AG04450 (cell line): ENCODE measurements at regions of chr14 and their contacts with region 1.

Region 1: GRCh38 chr14:35215110-35215876 is 76.9 kb upstream of the PSMA6 start:
- DNase-seq: peak; percentile 34
- H3K4me3 ChIP-seq: no peak overlapping the region
- H3K27ac ChIP-seq: no peak overlapping the region
- H3K27me3 ChIP-seq: no peaks in the 10 kb centered on the region
- CTCF ChIP-seq: peak; percentile 72

Region 2: GRCh38 chr14:34817768-34818167 is 397.5 kb before region 1 on chr14:
- CTCF ChIA-PET with region 1: no interaction called
- POLR2A ChIA-PET with region 1: no interaction called
- DNase-seq: no peak
- H3K4me3 ChIP-seq: no peak overlapping the region
- H3K27ac ChIP-seq: no peak overlapping the region
- H3K27me3 ChIP-seq: no peaks in the 10 kb centered on the region
- CTCF ChIP-seq: no peak

Region 3: GRCh38 chr14:35140718-35141581 is 74.3 kb before region 1 on chr14:
- CTCF ChIA-PET with region 1: interaction called, 37 read pairs
- POLR2A ChIA-PET with region 1: no interaction called
- DNase-seq: no peak
- H3K4me3 ChIP-seq: no peak overlapping the region
- H3K27ac ChIP-seq: no peak overlapping the region
- H3K27me3 ChIP-seq: no peaks in the 10 kb centered on the region
- CTCF ChIP-seq: peak; percentile 29

Region 4: DNA sequence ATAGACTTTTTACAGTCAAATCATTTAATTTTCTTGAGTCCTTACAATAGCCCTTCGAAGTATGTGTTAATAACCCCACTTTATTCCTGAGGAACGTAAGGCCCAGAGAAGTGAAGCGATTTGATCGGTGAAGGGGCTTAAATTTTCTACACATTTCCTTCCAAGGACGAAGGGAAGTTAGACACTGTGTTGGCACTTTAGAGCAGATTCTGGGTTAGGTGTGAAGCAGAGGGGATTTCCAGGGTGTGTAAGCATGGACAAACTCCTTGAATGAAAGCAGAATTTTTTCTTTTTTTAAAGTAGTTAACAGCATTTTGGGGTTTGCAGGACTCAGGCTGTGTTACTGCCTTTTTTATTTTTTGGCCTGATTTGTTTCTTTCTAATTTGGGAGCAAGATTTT is 54.1 kb before region 1 on chr14:
- CTCF ChIA-PET with region 1: interaction called, 10 read pairs
- POLR2A ChIA-PET with region 1: no interaction called
- DNase-seq: no peak
- H3K4me3 ChIP-seq: no peak overlapping the region
- H3K27ac ChIP-seq: no peak overlapping the region
- H3K27me3 ChIP-seq: no peaks in the 10 kb centered on the region
- CTCF ChIP-seq: no peak

Region 5: DNA sequence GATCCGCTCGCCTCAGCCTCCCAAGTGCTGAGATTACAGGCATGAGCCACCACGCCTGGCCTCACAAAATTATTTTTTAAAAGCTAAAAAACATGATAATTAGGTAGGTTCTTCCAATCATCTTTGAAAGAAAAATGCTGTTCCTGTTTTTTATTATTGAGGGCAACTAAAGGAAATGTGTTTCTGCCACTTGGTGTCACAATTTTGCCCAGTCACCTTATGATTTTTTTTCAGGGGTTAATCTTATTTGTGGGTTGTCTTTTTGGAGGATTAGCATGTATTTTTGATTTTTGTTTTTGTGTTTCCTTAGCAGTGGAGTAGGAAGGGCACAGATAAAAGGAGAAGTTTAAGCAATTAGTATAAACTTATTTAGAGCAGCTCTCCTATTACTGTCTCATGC is 13.1 kb before region 1 on chr14:
- CTCF ChIA-PET with region 1: interaction called, 12 read pairs
- POLR2A ChIA-PET with region 1: no interaction called
- DNase-seq: no peak
- H3K4me3 ChIP-seq: no peak overlapping the region
- H3K27ac ChIP-seq: no peak overlapping the region
- H3K27me3 ChIP-seq: no peaks in the 10 kb centered on the region
- CTCF ChIP-seq: no peak

Region 6: DNA sequence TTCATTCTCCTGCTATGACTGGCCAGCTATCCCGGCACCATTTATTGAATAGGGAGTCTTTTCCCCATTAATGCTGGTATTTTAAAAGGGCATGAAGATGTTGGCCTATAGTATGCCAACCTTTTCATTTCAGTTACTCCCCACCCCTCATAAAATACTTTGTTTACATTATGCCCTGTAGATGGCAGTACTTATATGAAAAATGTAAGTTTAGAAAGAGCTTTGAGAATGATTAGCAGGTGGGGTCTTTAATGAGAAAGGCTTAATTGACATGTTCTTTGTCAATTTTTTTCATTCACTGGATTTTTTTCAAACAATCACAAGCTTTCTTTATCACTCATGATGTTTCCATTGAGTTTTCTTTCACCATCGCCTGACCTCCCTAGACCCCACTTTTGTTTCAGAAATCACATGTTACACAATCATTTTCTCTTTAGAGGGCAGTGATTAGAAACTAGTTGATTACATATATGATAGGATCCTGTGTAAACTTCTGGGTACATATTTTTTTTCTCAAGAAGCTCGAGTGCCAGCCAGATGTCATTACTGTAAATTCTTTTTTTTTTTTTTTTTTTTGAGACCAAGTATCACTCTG is 14.3 kb after region 1 on chr14:
- CTCF ChIA-PET with region 1: interaction called, 36 read pairs
- POLR2A ChIA-PET with region 1: no interaction called
- DNase-seq: no peak
- H3K4me3 ChIP-seq: no peak overlapping the region
- H3K27ac ChIP-seq: no peak overlapping the region
- H3K27me3 ChIP-seq: no peaks in the 10 kb centered on the region
- CTCF ChIP-seq: 0 out of 2 replicates have a peak, but pooled peaks have one; percentile 2

Region 7: DNA sequence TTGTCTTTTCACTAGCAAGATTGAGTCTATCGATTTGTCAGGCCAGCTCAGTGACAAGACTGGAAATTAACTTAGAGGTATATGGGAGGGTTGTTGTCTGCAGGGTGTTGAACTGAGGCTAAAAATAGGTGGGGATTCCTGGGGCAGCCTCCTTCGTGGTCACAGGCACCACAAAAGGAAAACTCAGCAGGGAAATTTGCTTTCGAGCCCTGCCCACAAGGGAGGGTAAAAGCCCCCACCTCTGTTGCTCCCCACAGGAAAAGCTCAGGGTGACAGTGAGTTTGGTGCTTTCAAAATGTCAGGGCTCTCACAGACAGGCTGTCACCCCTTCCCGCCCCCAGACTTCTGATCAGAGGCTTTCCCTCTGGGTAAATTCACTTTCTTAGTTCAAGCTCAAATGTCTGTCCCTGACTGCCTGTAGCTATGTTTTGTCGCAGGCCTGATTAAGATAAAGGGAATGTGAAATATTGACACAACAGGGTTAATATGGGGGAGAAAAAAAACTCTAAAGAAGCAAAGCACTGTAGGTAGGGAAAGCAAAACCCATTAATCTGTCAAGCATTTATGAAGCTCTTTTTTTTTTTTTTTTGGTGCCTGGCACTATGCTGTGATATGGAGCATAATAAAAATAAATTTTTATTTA is 200.9 kb after region 1 on chr14:
- CTCF ChIA-PET with region 1: interaction called, 69 read pairs
- POLR2A ChIA-PET with region 1: no interaction called
- DNase-seq: no peak
- H3K4me3 ChIP-seq: no peak overlapping the region
- H3K27ac ChIP-seq: no peak overlapping the region
- H3K27me3 ChIP-seq: no peaks in the 10 kb centered on the region
- CTCF ChIP-seq: no peak